ENCODE measurements at regions of chr2 and their contacts with region 1.

Region 1: GRCh38 chr2:227406177-227407031 is 18.7 kb upstream of the SCYGR1 start:
- DNase-seq: peak; percentile 98
- H3K4me3 Mint-ChIP-seq: peak overlapping the region; percentile 21
- H3K27ac Mint-ChIP-seq: peak overlapping the region; percentile 38
- H3K4me1 Mint-ChIP-seq: peaks cover 41% of the 10 kb centered on the region
- H3K27me3 Mint-ChIP-seq: no peaks in the 10 kb centered on the region
- CTCF ChIP-seq: peak; percentile 67

Region 2: DNA sequence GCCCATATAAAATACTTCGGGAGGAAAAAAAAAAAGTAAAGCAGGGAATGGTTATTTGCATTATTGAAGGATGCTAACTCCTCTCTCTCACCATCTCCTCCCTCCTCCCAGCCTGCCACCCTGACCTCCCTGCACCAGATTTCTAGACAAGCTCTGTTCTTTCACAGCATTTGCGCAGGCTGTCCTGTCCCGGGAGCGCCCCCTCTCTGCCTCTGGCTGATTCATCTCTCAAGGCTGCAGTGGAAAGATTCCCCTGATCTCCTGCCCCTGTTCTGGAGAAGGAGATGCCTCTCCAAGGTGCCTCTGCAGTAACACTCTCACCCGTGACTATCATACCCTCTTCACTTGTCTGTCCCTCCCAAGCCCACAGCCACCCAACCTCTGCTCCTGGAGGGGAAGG is 280.9 kb before region 1 on chr2:
- CTCF ChIA-PET with region 1: no interaction called
- POLR2A ChIA-PET with region 1: no interaction called
- intact Hi-C with region 1: loop called (anchors 10 kb)
- DNase-seq: no peak
- H3K4me3 Mint-ChIP-seq: no peak overlapping the region
- H3K27ac Mint-ChIP-seq: no peak overlapping the region
- H3K4me1 Mint-ChIP-seq: peaks cover 5% of the 10 kb centered on the region
- H3K27me3 Mint-ChIP-seq: peaks cover 25% of the 10 kb centered on the region
- CTCF ChIP-seq: no peak

Region 3: GRCh38 chr2:227376911-227377396 is 29.4 kb before region 1 on chr2:
- CTCF ChIA-PET with region 1: interaction called, 4 read pairs
- POLR2A ChIA-PET with region 1: interaction called, 13 read pairs
- intact Hi-C with region 1: no loop called
- DNase-seq: peak; percentile 47
- H3K4me3 Mint-ChIP-seq: no peak overlapping the region
- H3K27ac Mint-ChIP-seq: peak overlapping the region; percentile 86
- H3K4me1 Mint-ChIP-seq: peaks cover 23% of the 10 kb centered on the region
- H3K27me3 Mint-ChIP-seq: no peaks in the 10 kb centered on the region
- CTCF ChIP-seq: no peak

Region 4: GRCh38 chr2:227430639-227431038 is 24.2 kb after region 1 on chr2:
- CTCF ChIA-PET with region 1: no interaction called
- POLR2A ChIA-PET with region 1: no interaction called
- intact Hi-C with region 1: no loop called
- DNase-seq: no peak
- H3K4me3 Mint-ChIP-seq: no peak overlapping the region
- H3K27ac Mint-ChIP-seq: no peak overlapping the region
- H3K4me1 Mint-ChIP-seq: no peaks in the 10 kb centered on the region
- H3K27me3 Mint-ChIP-seq: no peaks in the 10 kb centered on the region
- CTCF ChIP-seq: no peak

Region 5: GRCh38 chr2:227471924-227472264 is 65.5 kb after region 1 on chr2 and contains the start of gene AGFG1:
- CTCF ChIA-PET with region 1: interaction called, 48 read pairs
- POLR2A ChIA-PET with region 1: interaction called, 42 read pairs
- intact Hi-C with region 1: loop called (anchors 2 kb)
- DNase-seq: peak; percentile 83
- H3K4me3 Mint-ChIP-seq: peak within 1 kb of the TSS; percentile 89
- H3K27ac Mint-ChIP-seq: peak within 1 kb of the TSS; percentile 79
- H3K4me1 Mint-ChIP-seq: peaks cover 25% of the 10 kb centered on the region
- H3K27me3 Mint-ChIP-seq: no peaks in the 10 kb centered on the region
- CTCF ChIP-seq: peak; percentile 98
- total RNA-seq, gene AGFG1: 74.2 and 86.1 TPM in 2 replicates

Region 6: GRCh38 chr2:227817850-227818674 is 411.7 kb after region 1 on chr2:
- CTCF ChIA-PET with region 1: interaction called, 4 read pairs
- POLR2A ChIA-PET with region 1: interaction called, 4 read pairs
- intact Hi-C with region 1: loop called (anchors 1 kb)
- DNase-seq: peak; percentile 100
- H3K4me3 Mint-ChIP-seq: peak overlapping the region; percentile 80
- H3K27ac Mint-ChIP-seq: peak overlapping the region; percentile 92
- H3K4me1 Mint-ChIP-seq: peaks cover 46% of the 10 kb centered on the region
- H3K27me3 Mint-ChIP-seq: no peaks in the 10 kb centered on the region
- CTCF ChIP-seq: no peak

Region 7: DNA sequence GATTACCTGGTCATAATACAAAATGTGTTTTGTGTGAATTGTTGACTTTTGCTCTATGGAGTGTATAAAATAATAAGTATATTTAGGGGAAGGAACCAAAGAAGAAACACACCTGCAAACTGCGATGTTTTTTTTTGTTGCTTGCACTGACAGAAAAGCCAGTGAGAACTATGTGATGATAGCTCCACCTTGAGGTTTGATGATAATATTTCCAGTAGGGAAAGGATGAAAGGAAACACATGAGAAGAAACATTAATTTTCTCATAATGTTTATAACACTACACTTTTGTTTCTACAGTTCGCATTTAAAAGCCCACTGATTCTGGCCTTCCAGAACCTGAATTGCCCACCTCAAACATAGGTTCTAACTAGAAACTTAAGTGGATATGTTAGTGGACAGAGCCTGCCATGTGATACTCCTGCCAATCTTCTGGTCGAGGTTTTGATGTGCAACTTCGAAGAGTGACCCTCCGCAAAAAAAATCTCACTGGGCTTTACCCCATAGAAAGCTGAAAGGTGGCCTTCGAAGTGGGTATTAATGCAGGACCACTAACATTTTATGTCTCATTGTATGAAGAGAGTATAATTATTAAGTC is 1251.5 kb after region 1 on chr2:
- CTCF ChIA-PET with region 1: no interaction called
- POLR2A ChIA-PET with region 1: no interaction called
- intact Hi-C with region 1: loop called (anchors 5 kb)
- DNase-seq: peak; percentile 68
- H3K4me3 Mint-ChIP-seq: no peak overlapping the region
- H3K27ac Mint-ChIP-seq: no peak overlapping the region
- H3K4me1 Mint-ChIP-seq: no peaks in the 10 kb centered on the region
- H3K27me3 Mint-ChIP-seq: peaks cover 71% of the 10 kb centered on the region
- CTCF ChIP-seq: peak; percentile 78

Measured in MCF 10A (cell line).